ENCODE measurements at regions of chr12 and their contacts with region 1.

Region 1: DNA sequence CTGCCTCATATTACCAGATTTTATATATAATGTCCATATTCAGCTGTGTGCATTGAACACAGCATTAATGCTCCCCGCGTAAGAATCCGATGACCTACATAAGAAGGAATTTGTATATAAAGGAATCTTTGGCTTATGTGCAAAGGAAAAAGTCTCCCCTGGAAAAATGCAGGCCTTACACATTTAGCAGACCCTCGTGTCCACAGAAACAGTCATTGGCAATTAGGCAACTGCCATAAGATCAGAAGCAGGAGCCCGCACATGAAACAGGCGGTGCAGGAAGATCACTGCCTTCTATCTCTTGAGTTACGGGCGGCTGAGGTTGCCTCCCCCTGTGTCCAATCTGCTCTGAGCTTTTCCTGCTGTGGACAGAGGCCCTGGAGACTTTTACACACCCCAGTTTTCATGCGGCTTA is 63.2 kb upstream of the RFX4 start:
- DNase-seq: no peak
- H3K4me3 ChIP-seq: no peak overlapping the region
- H3K4me3 Mint-ChIP-seq: no peak overlapping the region
- H3K27ac Mint-ChIP-seq: no peak overlapping the region
- H3K4me1 ChIP-seq: no peaks in the 10 kb centered on the region
- H3K4me1 Mint-ChIP-seq: no peaks in the 10 kb centered on the region
- H3K27me3 ChIP-seq: no peaks in the 10 kb centered on the region; the same call in 1 of the 2 replicates
- H3K27me3 Mint-ChIP-seq: peaks cover 3% of the 10 kb centered on the region
- CTCF ChIP-seq: no peak

Region 2: DNA sequence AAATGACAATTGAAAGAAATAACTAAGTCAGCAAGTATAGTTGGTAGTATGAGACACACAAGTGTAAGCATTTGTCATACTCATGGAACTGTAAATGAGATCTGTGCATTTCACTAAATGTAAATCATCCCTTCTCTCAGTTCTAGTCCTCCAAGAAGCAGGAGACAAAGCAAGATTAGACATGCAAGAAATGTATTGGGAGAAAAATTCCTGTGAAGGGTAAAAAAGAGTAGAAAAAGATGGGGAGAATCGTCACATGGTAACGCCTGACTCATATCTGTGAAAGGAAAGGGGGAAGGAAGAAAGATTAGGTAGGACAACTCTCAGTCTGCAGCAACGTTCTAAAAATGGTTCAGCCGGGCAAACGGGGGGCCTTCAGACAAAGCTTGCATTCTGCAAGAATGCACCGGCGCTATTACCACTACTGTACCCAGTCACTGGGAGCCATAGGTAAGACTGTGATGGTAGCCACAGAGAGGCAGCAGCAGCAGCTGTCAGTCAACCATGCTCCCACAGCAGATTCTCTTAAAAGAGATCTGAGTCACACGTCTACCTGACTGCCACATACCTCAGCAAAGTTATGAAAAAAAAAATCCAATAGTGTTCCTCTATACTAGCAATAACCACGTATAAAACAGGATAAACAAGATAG is 45.2 kb after region 1 on chr12:
- CTCF ChIA-PET with region 1: no interaction called
- POLR2A ChIA-PET with region 1: no interaction called
- intact Hi-C with region 1: no loop called
- DNase-seq: no peak
- H3K4me3 ChIP-seq: no peak overlapping the region
- H3K4me3 Mint-ChIP-seq: no peak overlapping the region
- H3K27ac Mint-ChIP-seq: no peak overlapping the region
- H3K4me1 ChIP-seq: no peaks in the 10 kb centered on the region
- H3K4me1 Mint-ChIP-seq: no peaks in the 10 kb centered on the region
- H3K27me3 ChIP-seq: no peaks in the 10 kb centered on the region
- H3K27me3 Mint-ChIP-seq: peaks cover 11% of the 10 kb centered on the region
- CTCF ChIP-seq: no peak

Region 3: DNA sequence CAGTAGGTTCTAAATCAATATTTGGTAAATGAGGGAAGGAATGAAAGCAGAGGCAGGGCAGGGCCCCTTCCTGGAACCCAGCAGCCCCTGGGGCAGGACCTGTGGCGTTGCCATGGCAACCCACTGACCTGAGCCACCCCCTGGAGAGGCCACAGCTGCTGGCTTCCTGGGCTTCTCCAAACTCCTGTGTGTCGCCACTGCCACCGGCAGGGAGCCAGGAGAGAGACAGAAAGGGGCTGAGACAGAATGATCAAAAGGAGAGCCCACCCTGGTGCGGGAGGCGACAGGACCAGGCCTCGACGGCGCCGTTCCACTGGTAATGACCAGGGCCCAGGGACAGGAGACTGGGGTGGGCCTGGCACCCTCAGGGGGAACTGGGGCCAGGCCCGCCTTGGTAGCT is 81.4 kb after region 1 on chr12:
- CTCF ChIA-PET with region 1: no interaction called
- POLR2A ChIA-PET with region 1: interaction called, 13 read pairs
- intact Hi-C with region 1: no loop called
- DNase-seq: peak; percentile 20 to 52
- H3K4me3 ChIP-seq: no peak overlapping the region
- H3K4me3 Mint-ChIP-seq: no peak overlapping the region
- H3K27ac Mint-ChIP-seq: no peak overlapping the region
- H3K4me1 ChIP-seq: no peaks in the 10 kb centered on the region
- H3K4me1 Mint-ChIP-seq: no peaks in the 10 kb centered on the region
- H3K27me3 ChIP-seq: no peaks in the 10 kb centered on the region
- H3K27me3 Mint-ChIP-seq: peaks cover 6% of the 10 kb centered on the region
- CTCF ChIP-seq: no peak

Region 4: DNA sequence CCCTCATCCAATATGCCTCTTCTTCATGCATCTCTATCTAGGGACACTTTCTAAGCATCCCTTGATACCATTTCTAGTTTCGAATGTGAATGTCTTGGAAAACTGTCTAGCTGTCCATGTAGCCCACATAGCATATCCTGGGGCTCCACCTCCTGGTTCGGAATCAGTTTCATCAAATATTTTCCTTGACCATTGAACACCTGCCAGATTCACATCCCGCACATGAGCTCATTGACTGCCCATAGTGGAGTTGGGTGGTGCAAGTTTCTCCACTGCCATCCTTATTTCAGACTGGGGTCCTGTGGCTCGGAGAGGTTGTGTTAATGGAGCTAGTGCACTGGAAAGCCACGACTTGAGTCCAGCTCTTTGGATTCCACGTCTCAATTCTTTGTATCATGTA is 377.5 kb after region 1 on chr12:
- CTCF ChIA-PET with region 1: no interaction called
- POLR2A ChIA-PET with region 1: no interaction called
- intact Hi-C with region 1: loop called (anchors 10 kb)
- DNase-seq: peak in 1 of 2 experiments; percentile 31
- H3K4me3 ChIP-seq: no peak overlapping the region
- H3K4me3 Mint-ChIP-seq: no peak overlapping the region
- H3K27ac Mint-ChIP-seq: no peak overlapping the region
- H3K4me1 ChIP-seq: peaks cover 12% of the 10 kb centered on the region
- H3K4me1 Mint-ChIP-seq: peaks cover 10% of the 10 kb centered on the region
- H3K27me3 ChIP-seq: no peaks in the 10 kb centered on the region
- H3K27me3 Mint-ChIP-seq: no peaks in the 10 kb centered on the region
- CTCF ChIP-seq: peak in 1 of 2 experiments; percentile 37

Measured in Caco-2 (cell line).